ENCODE measurements at regions of chr5 and their contacts with region 1.

Region 1: DNA sequence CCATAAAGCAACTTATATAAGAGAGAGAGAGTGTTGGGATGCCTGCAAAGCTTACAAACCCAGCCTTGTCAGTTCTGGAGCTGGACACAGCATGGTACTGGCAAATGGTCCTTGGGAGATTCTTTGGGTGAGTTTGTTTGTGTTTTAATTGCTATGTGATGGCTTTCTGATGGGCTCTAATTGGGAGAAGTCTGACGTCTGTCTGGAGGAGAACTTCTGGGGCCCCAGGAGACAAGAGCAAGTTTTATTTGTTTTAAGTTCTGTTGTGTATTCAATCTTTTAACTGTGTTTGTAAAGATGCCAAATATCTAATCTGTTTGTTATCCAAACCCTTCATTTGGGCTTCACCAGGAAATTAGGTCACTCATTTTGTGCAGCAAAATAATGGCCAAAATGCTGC is 50.3 kb upstream of the AFAP1L1 start:
- DNase-seq: no peak
- ATAC-seq: no peak
- H3K4me3 ChIP-seq: no peak overlapping the region
- H3K27ac ChIP-seq: no peak overlapping the region
- H3K4me1 ChIP-seq: peaks cover 5% of the 10 kb centered on the region
- H3K27me3 ChIP-seq: no peaks in the 10 kb centered on the region
- CTCF ChIP-seq: no peak

Region 2: DNA sequence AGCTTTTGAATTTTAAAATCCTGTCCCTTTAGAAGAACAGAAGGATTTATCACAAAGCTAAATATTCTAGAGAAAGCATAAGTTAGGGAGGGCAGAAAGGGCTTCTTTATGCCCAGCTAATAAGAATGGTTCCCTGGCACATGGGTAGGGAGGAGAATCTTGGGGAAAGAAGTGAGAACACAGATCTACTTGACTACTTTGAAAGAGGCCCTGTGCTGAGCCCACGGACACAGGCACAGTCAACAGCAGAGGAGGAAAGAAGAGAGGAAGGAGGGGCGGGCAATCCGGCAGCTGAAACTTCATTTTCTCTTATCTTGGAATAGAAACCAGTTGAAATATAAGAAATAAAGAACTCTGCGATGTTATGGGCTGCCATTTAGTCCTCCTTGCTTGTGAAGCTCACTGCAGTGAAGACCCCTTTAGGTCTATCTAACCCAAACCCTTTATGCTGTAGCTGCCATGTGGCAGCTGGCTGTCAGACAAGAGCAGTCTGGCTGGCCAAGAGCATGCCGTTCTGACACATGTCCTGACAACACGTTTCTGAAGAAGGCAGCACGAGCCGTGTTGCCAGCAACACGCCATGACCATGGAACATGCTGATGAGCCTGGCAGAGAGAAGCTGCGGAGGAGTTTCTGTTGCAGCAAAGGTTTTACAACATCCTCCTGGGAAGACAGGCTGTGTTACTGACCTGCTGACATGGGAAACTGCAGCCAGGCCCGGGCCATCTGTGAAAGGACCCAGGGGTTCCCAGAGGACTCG is 45.8 kb before region 1 on chr5:
- intact Hi-C with region 1: loop called in 1 of 2 experiments (anchors 5 kb)
- DNase-seq: peak; percentile 60 to 89
- ATAC-seq: peak; percentile 67 to 94 (median 90)
- H3K4me3 ChIP-seq: no peak overlapping the region
- H3K27ac ChIP-seq: peak overlapping the region; percentile 81
- H3K4me1 ChIP-seq: peaks cover 56% of the 10 kb centered on the region
- H3K27me3 ChIP-seq: no peaks in the 10 kb centered on the region
- CTCF ChIP-seq: no peak